ENCODE measurements at regions of chr3 and their contacts with region 1.

Region 1: DNA sequence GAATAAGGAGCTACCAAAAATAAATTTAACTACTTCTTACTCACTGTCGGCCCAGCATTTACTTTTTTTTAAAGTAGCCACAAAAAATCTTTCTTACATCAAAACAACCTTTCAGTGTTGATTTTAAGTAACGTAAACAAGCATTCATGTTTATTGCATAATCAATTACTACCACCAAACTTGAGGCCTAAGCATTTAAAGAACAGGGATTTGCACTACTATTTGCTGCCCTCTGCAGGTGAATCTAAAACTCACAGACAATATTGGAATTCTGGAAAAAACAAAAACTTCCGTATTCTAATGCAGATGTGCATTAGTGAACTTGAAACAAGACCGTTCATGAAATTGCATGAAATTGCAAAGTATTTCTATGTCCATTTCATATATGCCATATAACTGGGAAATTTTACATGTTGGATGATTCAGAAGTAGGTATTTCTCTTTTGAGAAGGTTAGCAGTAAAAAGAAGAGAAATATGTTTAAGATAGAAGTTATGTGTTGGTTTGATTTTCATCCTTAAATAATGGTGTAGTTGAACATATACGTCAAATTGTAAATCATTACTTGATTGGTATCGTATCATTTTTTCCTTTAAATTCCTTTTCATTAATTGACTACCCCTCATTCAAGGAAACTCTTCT is 55.6 kb downstream of the CGGBP1 start:
- DNase-seq: peak; percentile 16
- CTCF ChIP-seq: peak; percentile 62

Region 2: DNA sequence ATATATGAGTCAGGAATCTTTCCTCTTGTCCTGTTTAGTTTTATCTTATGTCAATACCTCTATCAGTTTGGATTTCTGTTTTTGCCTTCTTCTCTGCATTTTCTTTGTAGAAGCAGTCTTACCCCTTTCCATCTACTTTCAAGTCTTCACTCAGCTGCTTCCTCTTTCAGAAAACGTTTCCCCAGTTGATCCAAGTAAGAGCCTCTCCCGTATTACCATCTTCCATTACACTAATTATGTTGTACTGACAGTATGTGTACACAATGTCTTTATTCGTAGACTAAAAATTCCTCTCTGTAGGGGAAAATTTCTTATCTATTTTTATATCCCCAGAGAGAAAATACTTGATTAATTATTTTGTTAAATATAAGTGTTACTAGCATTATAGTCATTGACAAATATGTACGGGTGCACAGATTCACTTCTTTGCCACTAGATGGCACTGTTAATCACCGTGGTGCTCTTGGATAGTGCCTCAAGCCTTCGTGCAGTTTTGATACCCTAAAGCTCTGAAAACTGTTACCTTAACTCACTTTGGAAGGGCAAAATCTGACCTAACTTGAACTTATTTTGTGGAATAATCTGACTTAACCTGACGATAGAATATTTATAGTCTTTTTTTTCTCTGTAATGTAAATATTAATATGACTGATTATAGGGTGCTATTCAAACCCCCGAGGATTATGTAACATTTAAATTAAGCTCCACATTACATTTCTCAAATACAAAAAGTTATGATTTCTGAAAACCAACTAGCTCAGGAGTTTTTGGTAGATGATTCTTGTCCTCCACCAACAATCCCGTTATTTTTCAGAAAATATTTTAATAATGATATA is 652.7 kb before region 1 on chr3:
- CTCF ChIA-PET with region 1: interaction called, 19 read pairs
- POLR2A ChIA-PET with region 1: no interaction called
- DNase-seq: peak; percentile 53
- CTCF ChIP-seq: peak; percentile 81

Region 3: DNA sequence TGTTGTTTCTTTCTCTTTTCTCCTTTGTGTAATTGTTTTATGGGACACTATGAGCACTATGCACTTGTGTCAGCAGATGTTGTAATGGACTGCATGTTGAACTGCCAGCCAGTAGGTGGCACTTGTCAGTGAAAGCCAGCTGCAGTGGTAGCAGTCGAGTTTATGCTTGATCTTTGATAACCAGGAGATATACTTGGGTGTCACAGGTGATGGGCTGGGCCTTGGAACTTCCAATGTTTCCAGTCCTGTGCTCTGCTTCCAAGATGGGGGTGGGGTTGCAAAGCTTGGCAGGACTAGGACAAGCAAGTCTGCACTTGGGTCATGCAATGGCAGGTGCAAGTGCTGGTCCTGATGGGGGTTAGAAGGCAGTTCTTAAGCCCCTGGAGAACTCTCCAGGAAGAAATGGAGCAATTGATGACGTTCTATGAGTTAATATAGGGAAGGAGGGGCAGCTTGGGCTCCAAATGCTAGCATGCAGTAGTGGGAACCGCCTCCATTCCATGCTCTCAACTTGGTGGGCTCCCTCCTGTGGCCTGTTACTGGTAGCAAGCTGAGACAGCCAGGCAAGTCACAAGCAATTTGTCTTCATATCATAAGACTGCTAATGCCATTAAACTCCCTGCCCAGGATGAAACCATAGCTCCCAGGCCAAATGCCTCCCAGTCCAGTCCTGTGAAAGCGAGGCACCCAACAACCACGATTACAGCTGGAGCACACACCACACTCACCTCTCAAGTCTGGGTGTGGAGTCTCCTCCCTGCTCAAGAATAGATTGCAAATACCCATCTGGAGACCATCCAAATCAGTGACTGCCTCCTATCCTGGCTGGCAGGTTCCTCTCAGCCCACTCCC is 231.7 kb before region 1 on chr3:
- CTCF ChIA-PET with region 1: interaction called, 15 read pairs
- POLR2A ChIA-PET with region 1: no interaction called
- DNase-seq: peak; percentile 24
- CTCF ChIP-seq: peak; percentile 88